ENCODE measurements at regions of chr18 and their contacts with region 1.

Region 1: DNA sequence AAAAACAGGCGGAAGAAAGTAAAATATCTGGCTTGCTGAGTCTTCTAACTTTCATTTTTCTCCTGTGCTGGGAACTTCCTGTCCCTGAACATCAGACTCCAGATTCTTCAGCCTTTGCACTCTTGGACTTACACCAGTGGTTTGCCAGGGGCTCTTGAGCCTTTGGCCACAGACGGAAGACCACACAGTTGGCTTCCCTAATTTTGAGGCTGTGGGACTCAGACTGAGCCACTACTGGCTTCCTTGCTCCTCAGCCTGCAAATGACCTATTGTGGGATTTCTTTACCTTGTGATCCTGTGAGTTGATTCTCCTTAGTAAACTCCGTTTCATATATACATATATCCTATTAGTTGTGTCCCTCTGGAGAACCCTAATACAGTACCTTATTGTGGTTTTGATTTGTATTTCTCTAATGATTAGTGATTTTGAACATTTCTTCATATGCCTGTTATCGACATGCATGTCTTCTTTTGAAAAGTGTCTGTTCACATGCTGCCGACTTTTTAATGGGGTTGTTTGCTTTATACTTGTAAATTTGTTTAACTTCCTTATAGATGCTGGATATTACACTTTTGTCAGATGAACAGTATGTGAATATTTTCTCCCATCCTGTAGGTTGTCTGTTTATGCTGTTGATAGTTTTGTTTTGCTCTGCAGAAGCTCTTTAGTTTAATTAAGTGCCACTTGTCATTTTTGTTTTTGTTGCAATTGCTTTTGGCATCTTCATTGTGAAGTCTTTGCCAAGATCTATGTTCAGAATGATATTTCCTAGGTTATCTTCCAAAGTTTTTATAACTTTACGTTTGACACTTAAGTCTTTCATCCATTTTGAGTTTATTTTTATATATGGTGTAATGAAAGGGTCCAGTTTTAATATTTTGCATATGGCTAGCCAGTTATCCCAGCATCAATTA is 348.8 kb upstream of the SETBP1 start:
- DNase-seq: no peak
- ATAC-seq: no peak

Region 2: DNA sequence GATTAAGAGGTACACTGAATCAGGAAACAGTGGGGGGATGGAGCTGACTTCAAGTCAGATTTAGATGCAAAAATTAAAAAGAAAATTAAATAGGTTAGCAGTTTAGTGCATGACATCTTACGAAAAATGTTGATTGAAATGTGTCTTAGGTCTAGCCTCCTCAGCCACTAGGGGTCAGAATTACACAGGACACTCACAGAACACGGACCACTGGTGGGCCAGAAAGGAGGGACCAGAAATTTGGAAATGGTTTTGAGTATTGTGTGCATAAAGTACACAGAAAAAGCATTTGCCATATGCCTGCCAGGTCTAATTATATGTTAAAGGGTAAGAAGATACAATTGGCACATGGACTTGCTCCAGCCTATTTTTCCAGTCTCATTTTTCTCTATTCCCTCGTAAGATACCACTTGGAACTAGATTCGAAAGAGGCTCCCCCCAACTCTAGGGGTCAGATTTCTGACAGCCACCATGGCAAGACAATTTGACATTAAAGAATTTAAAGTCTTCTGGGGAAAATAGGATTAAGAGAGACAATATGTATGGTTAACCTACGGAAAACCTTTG is 201.5 kb before region 1 on chr18:
- intact Hi-C with region 1: loop called (anchors 10 kb)
- DNase-seq: no peak
- ATAC-seq: peak; percentile 64

Measured in Right ventricle myocardium superior (tissue), 1 donor.